ENCODE measurements at regions of chr10 and their contacts with region 1.

Region 1: GRCh38 chr10:50021646-50022045 is 33.4 kb downstream of the AGAP6 start:
- DNase-seq: no peak
- ATAC-seq: no peak
- H3K4me3 ChIP-seq: no peak overlapping the region
- H3K4me3 Mint-ChIP-seq: no peak overlapping the region
- H3K27ac ChIP-seq: no peak overlapping the region
- H3K27ac Mint-ChIP-seq: no peak overlapping the region
- H3K4me1 ChIP-seq: no peaks in the 10 kb centered on the region
- H3K4me1 Mint-ChIP-seq: peaks cover 0 to 4% (median 0%) of the 10 kb centered on the region in 7 donors
- H3K27me3 ChIP-seq: no peaks in the 10 kb centered on the region
- H3K27me3 Mint-ChIP-seq: peaks cover 14 to 27% (median 24%) of the 10 kb centered on the region in 5 donors

Region 2: GRCh38 chr10:50152792-50153272 is 131.2 kb after region 1 on chr10:
- CTCF ChIA-PET with region 1: no interaction called
- POLR2A ChIA-PET with region 1: no interaction called
- intact Hi-C with region 1: loop called in 1 of 2 experiments (anchors 10 kb)
- DNase-seq: no peak
- ATAC-seq: no peak
- H3K4me3 ChIP-seq: no peak overlapping the region
- H3K4me3 Mint-ChIP-seq: no peak overlapping the region
- H3K27ac ChIP-seq: no peak overlapping the region
- H3K27ac Mint-ChIP-seq: no peak overlapping the region
- H3K4me1 ChIP-seq: no peaks in the 10 kb centered on the region
- H3K4me1 Mint-ChIP-seq: peaks cover 0 to 4% (median 2%) of the 10 kb centered on the region in 7 donors
- H3K27me3 ChIP-seq: no peaks in the 10 kb centered on the region
- H3K27me3 Mint-ChIP-seq: peaks cover 11 to 32% (median 22%) of the 10 kb centered on the region in 5 donors

Region 3: DNA sequence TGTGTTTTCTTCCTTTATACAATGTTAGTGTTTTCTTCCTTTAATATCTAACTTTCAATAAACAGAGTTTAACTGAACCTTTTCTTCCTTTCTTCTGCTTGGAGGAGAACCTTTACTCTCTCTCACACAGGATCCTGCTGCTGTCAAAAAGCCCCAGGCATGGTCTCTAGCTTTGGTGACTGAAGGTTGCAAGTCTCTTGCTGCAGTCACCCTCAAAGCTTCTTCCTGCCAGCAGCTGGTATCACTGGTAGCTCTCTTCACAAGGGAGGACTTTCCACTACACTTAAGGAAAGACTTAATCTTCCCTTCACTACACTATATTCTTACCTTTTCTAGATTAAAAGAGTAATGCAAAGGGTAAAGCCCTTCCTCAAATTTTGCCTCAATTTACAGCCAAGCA is 448.7 kb after region 1 on chr10:
- CTCF ChIA-PET with region 1: no interaction called
- POLR2A ChIA-PET with region 1: no interaction called
- intact Hi-C with region 1: no loop called
- DNase-seq: no peak
- ATAC-seq: no peak
- H3K4me3 ChIP-seq: no peak overlapping the region
- H3K4me3 Mint-ChIP-seq: peak overlapping the region in 1 of 10 donors; percentile 5
- H3K27ac ChIP-seq: no peak overlapping the region
- H3K27ac Mint-ChIP-seq: peak overlapping the region in 2 of 9 donors; percentile 33 to 61
- H3K4me1 ChIP-seq: peaks cover 9 to 15% of the 10 kb centered on the region in 2 donors
- H3K4me1 Mint-ChIP-seq: peaks cover 33 to 77% (median 76%) of the 10 kb centered on the region in 7 donors
- H3K27me3 ChIP-seq: no peaks in the 10 kb centered on the region
- H3K27me3 Mint-ChIP-seq: no peaks in the 10 kb centered on the region

Region 4: DNA sequence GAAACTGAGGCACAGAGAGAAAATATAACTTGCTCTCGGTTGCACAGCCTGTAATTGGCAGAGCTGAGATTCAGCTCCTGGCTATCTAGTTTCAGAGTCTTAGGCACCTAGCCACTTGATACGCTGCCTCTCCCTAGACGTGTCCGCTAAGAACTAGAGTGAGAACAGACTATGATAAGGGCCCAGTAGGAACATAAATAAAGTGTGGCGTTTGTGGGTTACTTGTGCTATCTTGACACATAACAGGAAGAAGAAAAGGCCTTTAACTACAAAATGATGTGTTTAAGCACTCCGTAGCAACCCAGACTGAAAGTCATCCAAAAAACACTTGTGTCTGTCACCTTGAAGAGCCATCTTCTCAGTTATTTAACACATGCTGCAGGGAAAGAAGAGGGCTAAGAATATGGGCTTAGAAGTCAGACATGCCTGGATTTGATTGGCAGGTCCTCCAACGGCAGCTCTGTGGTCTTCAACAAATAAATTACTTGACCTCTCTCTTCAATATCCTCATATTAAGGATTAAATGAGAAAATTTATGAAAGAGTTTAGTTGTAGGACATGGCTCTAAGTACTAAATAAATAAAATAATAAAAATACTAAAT is 505.9 kb after region 1 on chr10:
- CTCF ChIA-PET with region 1: no interaction called
- POLR2A ChIA-PET with region 1: no interaction called
- intact Hi-C with region 1: no loop called
- DNase-seq: no peak
- ATAC-seq: peak; percentile 79
- H3K4me3 ChIP-seq: no peak overlapping the region
- H3K4me3 Mint-ChIP-seq: peak overlapping the region in 1 of 10 donors; percentile 39
- H3K27ac ChIP-seq: no peak overlapping the region
- H3K27ac Mint-ChIP-seq: peak overlapping the region in 2 of 9 donors; percentile 32 to 71
- H3K4me1 ChIP-seq: peaks cover 0 to 7% of the 10 kb centered on the region in 2 donors
- H3K4me1 Mint-ChIP-seq: peaks cover 10 to 66% (median 53%) of the 10 kb centered on the region in 7 donors
- H3K27me3 ChIP-seq: no peaks in the 10 kb centered on the region
- H3K27me3 Mint-ChIP-seq: no peaks in the 10 kb centered on the region

Measured in naive thymus-derived CD4-positive, alpha-beta T cell (primary cell).